ENCODE measurements at regions of chr9 and their contacts with region 1.

Region 1: GRCh38 chr9:135355521-135356011 is 124.0 kb upstream of the PPP1R26 start:
- DNase-seq: no peak
- ATAC-seq: no peak
- H3K4me3 ChIP-seq: no peak overlapping the region
- H3K27ac ChIP-seq: no peak overlapping the region
- H3K4me1 ChIP-seq: no peaks in the 10 kb centered on the region
- H3K27me3 ChIP-seq: no peaks in the 10 kb centered on the region

Region 2: DNA sequence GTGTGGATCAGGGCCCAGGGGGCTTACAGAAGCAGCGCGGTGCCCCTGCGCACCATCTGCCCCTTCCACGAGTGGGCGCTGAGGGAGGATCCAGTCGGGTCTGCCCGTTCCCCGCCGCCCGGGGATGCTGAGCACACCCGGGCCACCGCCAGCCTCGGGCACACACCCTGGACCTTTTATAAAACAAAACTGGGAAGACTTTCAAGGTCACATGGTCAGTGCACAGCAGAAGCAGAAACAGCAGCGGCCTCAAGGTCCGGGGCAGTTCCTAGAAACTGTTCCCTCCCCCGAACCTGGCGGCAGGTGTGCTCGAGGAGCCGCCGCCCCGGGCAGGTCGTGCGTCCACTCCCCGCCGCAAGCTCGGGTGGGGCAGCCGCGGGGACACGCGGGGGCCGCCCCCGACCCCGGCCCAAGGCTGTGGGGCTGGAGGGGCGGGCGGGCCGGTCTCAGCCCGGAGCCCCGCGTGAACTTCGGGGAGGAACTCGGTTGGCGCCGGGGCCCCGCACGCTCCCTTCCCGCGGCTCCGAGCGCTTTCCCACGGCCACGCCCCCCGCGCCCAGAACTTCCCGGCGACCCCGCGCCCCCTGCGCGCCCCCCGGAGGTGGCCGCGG is 123.4 kb after region 1 on chr9:
- intact Hi-C with region 1: no loop called
- DNase-seq: peak in 1 of 2 donors; percentile 64
- ATAC-seq: peak; percentile 70
- H3K4me3 ChIP-seq: peak overlapping the region; percentile 89 to 96
- H3K27ac ChIP-seq: no peak overlapping the region
- H3K4me1 ChIP-seq: no peaks in the 10 kb centered on the region
- H3K27me3 ChIP-seq: no peaks in the 10 kb centered on the region

Region 3: GRCh38 chr9:135639196-135639595 is 283.6 kb after region 1 on chr9 and contains the start of gene GLT6D1:
- intact Hi-C with region 1: loop called in 1 of 2 experiments (anchors 10 kb)
- DNase-seq: no peak
- ATAC-seq: no peak
- H3K4me3 ChIP-seq: no peak within 1 kb of the TSS
- H3K27ac ChIP-seq: no peak within 1 kb of the TSS
- H3K4me1 ChIP-seq: no peaks in the 10 kb centered on the region
- H3K27me3 ChIP-seq: no peaks in the 10 kb centered on the region
- total RNA-seq, gene GLT6D1: not detected

Measured in aorta (tissue), 5 donors.